ENCODE measurements at regions of chr9 and their contacts with region 1.

Region 1: GRCh38 chr9:93095205-93096130 is 549 bp upstream of the CARD19 start:
- DNase-seq: peak; percentile 100
- ATAC-seq: peak; percentile 81
- H3K4me3 ChIP-seq: peak overlapping the region in 4 of 5 experiments; percentile 58 to 81 (median 77)
- H3K4me3 Mint-ChIP-seq: peak overlapping the region; percentile 82
- H3K27ac ChIP-seq: peak overlapping the region; percentile 97 to 98
- H3K27ac Mint-ChIP-seq: peak overlapping the region; percentile 95
- H3K4me1 ChIP-seq: peaks cover 68 to 80% of the 10 kb centered on the region in 2 donors
- H3K4me1 Mint-ChIP-seq: peaks cover 76% of the 10 kb centered on the region
- H3K27me3 ChIP-seq: no peaks in the 10 kb centered on the region
- H3K27me3 Mint-ChIP-seq: no peaks in the 10 kb centered on the region
- CTCF ChIP-seq: no peak

Region 2: DNA sequence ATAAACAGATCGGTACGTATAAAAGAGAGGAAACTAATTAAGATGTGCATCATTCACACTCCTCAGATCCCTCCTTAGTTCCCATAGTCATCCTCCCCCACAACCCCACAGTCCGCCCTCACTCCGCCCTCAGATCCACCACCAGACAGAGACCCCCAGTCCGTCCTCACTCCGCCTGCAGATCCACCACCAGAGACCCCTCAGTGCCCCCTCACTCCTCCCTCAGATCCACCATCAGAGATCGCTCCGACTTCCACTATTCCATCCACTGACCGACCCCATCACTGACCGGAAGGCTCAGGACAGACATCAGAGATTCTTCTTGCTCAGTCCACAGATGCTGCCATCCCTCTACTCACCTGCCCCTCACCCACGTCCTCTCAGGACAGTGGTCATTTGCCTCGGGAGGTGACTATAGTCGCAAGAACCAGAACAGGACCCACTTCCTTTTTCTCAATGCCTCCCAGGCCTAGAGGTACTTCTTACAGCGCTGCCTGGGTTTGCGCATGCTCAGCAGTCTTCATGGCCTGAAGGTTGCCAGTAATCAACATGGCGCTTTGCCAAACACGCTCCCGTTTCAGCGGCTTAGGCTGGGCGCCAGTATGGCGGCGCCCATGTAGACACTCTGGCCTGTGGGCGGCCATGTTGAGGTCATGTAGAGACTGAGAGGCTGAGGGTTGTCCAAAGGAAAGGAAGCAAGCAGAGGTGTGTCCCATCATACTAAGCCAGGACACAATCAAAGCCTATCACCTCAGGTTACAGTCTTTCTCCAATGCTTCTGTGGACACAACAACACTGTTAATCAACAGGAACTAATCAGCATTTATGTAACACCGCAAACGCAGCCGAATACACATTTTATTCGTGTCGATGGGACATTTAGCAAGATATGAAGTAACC is 217.7 kb before region 1 on chr9 and contains the start of gene ZNF484:
- CTCF ChIA-PET with region 1: no interaction called
- POLR2A ChIA-PET with region 1: no interaction called
- intact Hi-C with region 1: loop called (anchors 1 kb)
- DNase-seq: peak; percentile 99
- ATAC-seq: peak; percentile 96
- H3K4me3 ChIP-seq: peak within 1 kb of the TSS; percentile 68 to 94 (median 78)
- H3K4me3 Mint-ChIP-seq: peak within 1 kb of the TSS; percentile 100
- H3K27ac ChIP-seq: peak within 1 kb of the TSS; percentile 85 to 93
- H3K27ac Mint-ChIP-seq: peak within 1 kb of the TSS; percentile 99
- H3K4me1 ChIP-seq: peaks cover 3 to 9% of the 10 kb centered on the region in 2 donors
- H3K4me1 Mint-ChIP-seq: peaks cover 31% of the 10 kb centered on the region
- H3K27me3 ChIP-seq: no peaks in the 10 kb centered on the region
- H3K27me3 Mint-ChIP-seq: no peaks in the 10 kb centered on the region
- CTCF ChIP-seq: no peak
- total RNA-seq, gene ZNF484: 22.7 and 22.9 TPM in 2 replicates

Region 3: GRCh38 chr9:93003552-93004407 is 91.7 kb before region 1 on chr9:
- CTCF ChIA-PET with region 1: interaction called, 7 read pairs
- POLR2A ChIA-PET with region 1: no interaction called
- intact Hi-C with region 1: loop called (anchors 5 kb)
- DNase-seq: peak; percentile 72
- ATAC-seq: peak; percentile 72
- H3K4me3 ChIP-seq: no peak overlapping the region
- H3K4me3 Mint-ChIP-seq: no peak overlapping the region
- H3K27ac ChIP-seq: no peak overlapping the region
- H3K27ac Mint-ChIP-seq: peak overlapping the region; percentile 6
- H3K4me1 ChIP-seq: peaks cover 0 to 3% of the 10 kb centered on the region in 2 donors
- H3K4me1 Mint-ChIP-seq: peaks cover 25% of the 10 kb centered on the region
- H3K27me3 ChIP-seq: no peaks in the 10 kb centered on the region
- H3K27me3 Mint-ChIP-seq: no peaks in the 10 kb centered on the region
- CTCF ChIP-seq: peak; percentile 75

Region 4: GRCh38 chr9:93058355-93059096 is 36.9 kb before region 1 on chr9 and contains the start of gene SUSD3:
- CTCF ChIA-PET with region 1: interaction called, 5 read pairs
- POLR2A ChIA-PET with region 1: interaction called, 36 read pairs
- intact Hi-C with region 1: loop called (anchors 1 kb)
- DNase-seq: peak; percentile 83
- ATAC-seq: peak; percentile 75
- H3K4me3 ChIP-seq: peak within 1 kb of the TSS; percentile 56 to 69 (median 67)
- H3K4me3 Mint-ChIP-seq: peak within 1 kb of the TSS; percentile 90
- H3K27ac ChIP-seq: peak within 1 kb of the TSS; percentile 79 to 80
- H3K27ac Mint-ChIP-seq: peak within 1 kb of the TSS; percentile 99
- H3K4me1 ChIP-seq: peaks cover 50 to 60% of the 10 kb centered on the region in 2 donors
- H3K4me1 Mint-ChIP-seq: peaks cover 66% of the 10 kb centered on the region
- H3K27me3 ChIP-seq: no peaks in the 10 kb centered on the region
- H3K27me3 Mint-ChIP-seq: no peaks in the 10 kb centered on the region
- CTCF ChIP-seq: no peak
- total RNA-seq, gene SUSD3: 38.3 and 41.0 TPM in 2 replicates

Region 5: DNA sequence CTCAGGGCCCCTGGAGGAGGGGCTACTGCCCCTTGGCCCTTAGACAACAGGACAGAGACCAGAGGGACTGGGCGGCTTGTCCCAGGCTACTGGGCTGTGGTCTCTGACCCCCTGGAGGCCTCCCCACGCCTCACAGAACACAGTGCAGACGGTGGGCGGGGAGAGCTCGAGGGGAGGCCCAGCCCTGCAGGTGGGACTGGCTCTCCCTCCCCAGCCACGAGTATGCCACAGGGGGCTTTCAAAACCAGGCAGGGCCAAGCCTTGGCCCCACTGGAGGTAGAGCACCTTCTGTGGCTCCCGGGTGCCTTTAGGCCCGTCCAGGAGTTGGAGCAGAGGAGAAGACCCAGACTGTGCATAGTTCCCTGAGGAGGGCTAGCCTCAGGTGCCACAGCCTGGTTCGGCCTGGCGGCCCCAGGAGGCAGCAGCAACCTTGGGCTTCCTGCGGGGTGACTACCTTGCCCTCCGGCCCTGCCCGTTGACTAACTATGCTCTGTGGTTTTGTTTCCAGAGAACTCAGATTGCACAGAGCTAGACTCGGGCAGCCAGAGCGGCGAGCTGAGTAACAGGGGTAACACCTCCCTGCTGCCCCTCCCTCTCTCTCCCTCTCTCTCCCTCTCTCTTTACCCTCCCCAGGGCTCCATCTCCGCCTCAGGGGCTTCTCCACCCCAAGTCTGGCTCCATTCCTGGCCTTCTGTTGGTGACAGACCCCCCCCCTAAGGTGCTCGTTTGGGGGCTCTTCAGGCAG is 16.1 kb after region 1 on chr9:
- CTCF ChIA-PET with region 1: interaction called, 25 read pairs
- POLR2A ChIA-PET with region 1: interaction called, 9 read pairs
- intact Hi-C with region 1: no loop called
- DNase-seq: no peak
- ATAC-seq: no peak
- H3K4me3 ChIP-seq: no peak overlapping the region
- H3K4me3 Mint-ChIP-seq: no peak overlapping the region
- H3K27ac ChIP-seq: no peak overlapping the region
- H3K27ac Mint-ChIP-seq: no peak overlapping the region
- H3K4me1 ChIP-seq: peaks cover 21 to 29% of the 10 kb centered on the region in 2 donors
- H3K4me1 Mint-ChIP-seq: peaks cover 30% of the 10 kb centered on the region
- H3K27me3 ChIP-seq: no peaks in the 10 kb centered on the region
- H3K27me3 Mint-ChIP-seq: no peaks in the 10 kb centered on the region
- CTCF ChIP-seq: no peak

Region 6: DNA sequence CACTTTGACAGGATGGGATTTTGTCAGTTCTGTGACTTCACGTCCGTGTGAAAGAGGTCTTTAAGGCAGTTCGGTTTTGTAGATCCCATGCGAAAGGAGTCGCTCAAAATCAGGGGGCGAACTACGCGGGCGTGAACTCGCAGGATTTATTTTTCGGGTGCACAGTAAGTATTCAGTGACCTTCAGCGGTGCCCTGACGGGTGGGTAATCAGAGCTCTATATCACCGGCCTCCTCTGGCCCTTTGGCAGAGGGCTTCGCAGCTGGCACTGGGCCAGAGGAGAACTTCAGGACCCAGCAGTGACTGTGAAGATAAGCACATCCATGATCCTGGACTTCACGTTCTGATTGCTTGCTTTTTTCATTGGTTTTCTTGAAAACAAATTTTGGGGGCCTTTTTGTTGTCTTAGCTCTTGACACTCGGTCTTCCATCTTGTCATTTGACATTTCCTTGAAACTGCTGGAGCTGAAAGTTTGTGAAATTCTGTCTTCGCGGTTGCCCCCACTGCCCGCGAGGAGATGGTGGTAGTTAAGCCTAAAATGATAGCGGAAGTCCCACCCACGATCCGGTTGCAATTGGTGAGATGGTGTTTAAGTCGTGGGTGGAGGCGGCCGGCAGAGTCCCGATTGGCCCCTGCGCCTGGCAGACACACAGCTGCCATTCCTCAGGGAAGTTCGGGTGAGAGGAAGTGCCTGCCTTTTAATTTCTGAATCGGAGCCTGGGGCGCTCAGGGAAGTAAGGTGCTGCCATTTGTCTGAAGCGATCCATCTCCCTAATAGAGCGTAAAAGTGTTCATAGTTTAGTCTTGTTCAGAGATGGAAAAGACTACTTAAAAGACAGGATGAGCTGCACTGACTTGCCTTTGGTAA is 357.8 kb after region 1 on chr9 and contains the start of gene FAM120AOS:
- CTCF ChIA-PET with region 1: no interaction called
- POLR2A ChIA-PET with region 1: no interaction called
- intact Hi-C with region 1: loop called (anchors 1 kb)
- DNase-seq: peak; percentile 92
- ATAC-seq: peak; percentile 72
- H3K4me3 ChIP-seq: peak within 1 kb of the TSS; percentile 73 to 96 (median 84)
- H3K4me3 Mint-ChIP-seq: peak within 1 kb of the TSS; percentile 93
- H3K27ac ChIP-seq: peak within 1 kb of the TSS; percentile 65 to 79
- H3K27ac Mint-ChIP-seq: peak within 1 kb of the TSS; percentile 93
- H3K4me1 ChIP-seq: peaks cover 20 to 29% of the 10 kb centered on the region in 2 donors
- H3K4me1 Mint-ChIP-seq: peaks cover 44% of the 10 kb centered on the region
- H3K27me3 ChIP-seq: no peaks in the 10 kb centered on the region
- H3K27me3 Mint-ChIP-seq: no peaks in the 10 kb centered on the region
- CTCF ChIP-seq: no peak
- total RNA-seq, gene FAM120AOS: 47.8 and 51.2 TPM in 2 replicates